IMR-90 (cell line): ENCODE measurements at regions of chr12 and their contacts with region 1.

Region 1: DNA sequence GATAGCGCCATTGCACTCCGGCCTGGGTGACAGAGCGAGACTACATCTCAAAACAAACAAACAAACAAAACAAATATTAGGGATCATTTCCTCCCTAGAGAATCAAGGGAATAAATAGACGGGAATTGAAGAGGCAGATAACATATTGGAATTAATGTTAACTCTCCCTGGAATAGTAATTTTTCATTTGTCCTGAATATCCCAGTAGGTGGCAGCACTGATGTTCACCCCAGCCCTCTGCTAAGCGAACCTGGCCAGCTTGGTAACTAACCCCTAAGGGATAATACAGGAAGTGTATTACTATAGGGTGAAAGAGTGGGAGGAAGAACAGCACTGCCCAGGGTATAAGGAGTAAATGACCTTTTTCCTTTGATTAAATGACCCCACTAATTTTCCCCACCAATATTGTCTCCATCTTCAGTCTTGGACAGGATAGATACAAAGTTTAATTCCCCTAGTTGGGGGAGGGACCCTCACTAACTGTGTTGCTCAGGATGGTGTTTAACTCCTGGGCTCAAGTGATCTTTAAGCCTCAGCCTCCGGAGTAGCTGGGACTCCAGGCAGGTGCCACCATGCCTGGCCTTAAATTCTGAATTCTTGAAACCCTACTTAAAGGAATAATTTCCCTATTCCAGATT is 40.5 kb downstream of the SLC2A14 start:
- DNase-seq: peak; percentile 71
- ATAC-seq: peak; percentile 97
- H3K4me3 ChIP-seq: no peak overlapping the region
- H3K27ac ChIP-seq: no peak overlapping the region
- H3K4me1 ChIP-seq: no peaks in the 10 kb centered on the region
- H3K27me3 ChIP-seq: peaks cover 1% of the 10 kb centered on the region; the same call in 1 of the 2 replicates
- CTCF ChIP-seq: peak; percentile 71
- POLR2A ChIP-seq: no peak
- RAD21 ChIP-seq: peak; percentile 77

Region 2: GRCh38 chr12:7859552-7859951 is 27.4 kb after region 1 on chr12:
- CTCF ChIA-PET with region 1: interaction called, 5 read pairs
- POLR2A ChIA-PET with region 1: no interaction called
- dilution Hi-C with region 1: no loop called
- in situ Hi-C with region 1: no loop called
- intact Hi-C with region 1: loop called (anchors 1 kb)
- DNase-seq: peak; percentile 81
- ATAC-seq: peak; percentile 58
- H3K4me3 ChIP-seq: no peak overlapping the region
- H3K27ac ChIP-seq: peak overlapping the region; percentile 43
- H3K4me1 ChIP-seq: peaks cover 3% of the 10 kb centered on the region
- H3K27me3 ChIP-seq: no peaks in the 10 kb centered on the region
- CTCF ChIP-seq: no peak
- POLR2A ChIP-seq: no peak
- RAD21 ChIP-seq: no peak